Calu3 (cell line): ENCODE measurements at regions of chr18 and their contacts with region 1.

Region 1: GRCh38 chr18:57959278-57959677 is 84.7 kb upstream of the NEDD4L start:
- DNase-seq: peak; percentile 72
- H3K4me3 Mint-ChIP-seq: no peak overlapping the region
- H3K27ac Mint-ChIP-seq: no peak overlapping the region
- H3K4me1 Mint-ChIP-seq: peaks cover 31% of the 10 kb centered on the region
- H3K27me3 Mint-ChIP-seq: no peaks in the 10 kb centered on the region
- CTCF ChIP-seq: no peak

Region 2: DNA sequence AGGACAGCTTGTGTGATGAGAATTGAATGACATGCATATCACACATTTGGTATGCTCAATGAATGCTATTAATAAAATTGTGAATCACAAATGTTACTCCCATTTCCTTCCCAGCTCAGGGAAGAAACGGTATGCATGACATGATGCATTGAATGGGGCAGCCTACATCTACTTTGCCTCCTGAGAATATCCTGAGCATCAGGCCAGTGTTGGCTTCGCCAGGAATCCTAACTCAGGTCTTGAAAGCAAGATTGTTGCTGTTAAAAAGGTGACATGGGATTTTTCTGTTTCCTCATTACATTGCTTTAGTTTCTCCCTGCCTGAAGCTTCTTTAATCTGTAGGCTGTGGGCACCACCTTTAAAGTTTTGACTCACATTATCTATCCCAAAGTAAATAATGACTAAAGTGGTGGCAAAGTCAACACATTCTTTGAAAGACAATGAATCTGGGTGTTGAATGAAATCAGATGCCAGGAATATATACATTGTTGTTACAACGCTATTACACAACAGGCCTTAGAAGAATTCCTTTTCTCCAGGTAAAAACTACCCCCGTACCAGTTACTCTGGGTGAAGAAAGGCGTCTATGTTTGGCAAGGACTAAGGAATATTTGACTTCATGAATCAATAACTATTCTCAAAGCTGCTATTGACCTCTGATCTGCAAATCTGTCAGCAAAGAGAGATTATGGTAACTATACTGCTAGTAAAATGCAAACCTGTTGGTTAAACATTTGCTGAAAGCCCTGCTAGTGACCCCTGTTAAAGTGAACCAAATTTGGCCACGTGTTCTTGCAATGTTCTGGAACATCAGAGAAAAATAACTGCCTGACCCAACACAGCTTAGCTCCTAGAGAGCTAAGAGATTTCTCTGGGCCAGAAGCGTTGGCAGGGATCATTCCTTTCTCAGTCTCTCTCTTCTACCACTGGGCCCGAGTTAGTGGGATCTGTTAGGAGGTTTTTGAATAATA is 54.2 kb after region 1 on chr18:
- CTCF ChIA-PET with region 1: interaction called, 11 read pairs
- intact Hi-C with region 1: loop called (anchors 5 kb)
- DNase-seq: peak; percentile 49
- H3K4me3 Mint-ChIP-seq: no peak overlapping the region
- H3K27ac Mint-ChIP-seq: peak overlapping the region; percentile 92
- H3K4me1 Mint-ChIP-seq: peaks cover 64% of the 10 kb centered on the region
- H3K27me3 Mint-ChIP-seq: no peaks in the 10 kb centered on the region
- CTCF ChIP-seq: no peak

Region 3: DNA sequence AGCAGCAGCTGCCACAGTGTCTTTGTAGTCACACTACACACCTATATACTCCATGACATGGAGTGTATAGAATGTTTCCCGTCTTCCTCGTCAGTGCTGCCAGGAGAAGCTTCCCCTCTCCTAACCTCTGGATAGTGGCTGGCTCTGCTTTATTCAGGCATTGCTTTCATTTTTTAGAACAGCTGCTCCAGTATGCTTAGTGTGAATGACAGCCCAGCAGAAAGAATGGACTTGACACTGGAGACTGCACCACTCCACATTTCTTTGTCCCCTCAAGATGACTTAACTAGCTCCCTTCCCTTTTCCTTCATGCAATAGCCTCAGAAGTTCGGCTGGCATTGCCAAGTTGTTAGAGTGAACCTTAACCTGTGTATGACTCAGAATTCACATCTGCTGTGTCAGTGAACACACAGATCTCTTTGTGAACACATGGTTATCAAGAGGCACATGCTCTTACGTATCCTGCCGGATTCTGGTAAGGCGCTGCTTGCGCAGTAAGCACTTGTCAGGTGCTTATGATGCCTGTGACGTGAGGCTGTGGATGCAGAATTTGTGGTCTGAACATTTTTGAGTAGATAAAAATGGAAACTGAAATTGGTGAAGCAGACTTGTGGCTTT is 158.6 kb after region 1 on chr18:
- CTCF ChIA-PET with region 1: interaction called, 20 read pairs
- intact Hi-C with region 1: loop called (anchors 2 kb)
- DNase-seq: peak; percentile 67
- H3K4me3 Mint-ChIP-seq: peak overlapping the region; percentile 43
- H3K27ac Mint-ChIP-seq: peak overlapping the region; percentile 96
- H3K4me1 Mint-ChIP-seq: peaks cover 66% of the 10 kb centered on the region
- H3K27me3 Mint-ChIP-seq: no peaks in the 10 kb centered on the region
- CTCF ChIP-seq: no peak

Region 4: DNA sequence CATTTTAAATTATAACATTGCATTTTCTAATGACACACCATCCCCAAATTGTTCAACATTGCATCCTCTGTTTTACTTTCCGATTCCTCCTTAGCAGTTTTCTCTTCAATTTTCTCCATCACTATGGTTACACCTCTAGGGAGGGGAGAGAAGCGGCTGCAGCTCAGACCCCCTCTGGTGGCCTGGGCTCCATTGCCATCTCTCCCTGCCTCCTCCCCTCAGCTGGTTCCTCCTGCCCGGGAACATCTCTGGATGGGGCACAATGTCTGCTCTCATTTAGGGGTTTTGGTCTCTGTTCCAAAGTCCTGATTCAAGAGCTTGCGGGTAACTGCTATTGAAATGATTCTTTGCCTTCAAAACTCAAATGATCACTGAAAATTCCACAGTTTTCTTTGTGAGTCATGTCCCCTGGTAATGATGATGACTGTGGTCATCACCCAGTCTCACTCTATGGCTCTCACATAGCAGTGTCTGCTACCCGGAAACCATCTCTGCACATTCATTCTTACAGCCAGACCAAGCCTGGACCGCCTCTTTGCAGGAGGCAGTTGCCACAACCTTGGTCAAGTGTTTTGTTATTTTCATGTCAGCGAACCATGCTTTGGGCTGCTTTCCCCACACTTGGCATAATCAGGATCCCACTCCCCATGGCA is 405.7 kb after region 1 on chr18:
- CTCF ChIA-PET with region 1: no interaction called
- intact Hi-C with region 1: no loop called
- DNase-seq: no peak
- H3K4me3 Mint-ChIP-seq: no peak overlapping the region
- H3K27ac Mint-ChIP-seq: no peak overlapping the region
- H3K4me1 Mint-ChIP-seq: no peaks in the 10 kb centered on the region
- H3K27me3 Mint-ChIP-seq: no peaks in the 10 kb centered on the region
- CTCF ChIP-seq: no peak